HEK293 (cell line): ENCODE measurements at regions of chr17 and their contacts with region 1.

Region 1: DNA sequence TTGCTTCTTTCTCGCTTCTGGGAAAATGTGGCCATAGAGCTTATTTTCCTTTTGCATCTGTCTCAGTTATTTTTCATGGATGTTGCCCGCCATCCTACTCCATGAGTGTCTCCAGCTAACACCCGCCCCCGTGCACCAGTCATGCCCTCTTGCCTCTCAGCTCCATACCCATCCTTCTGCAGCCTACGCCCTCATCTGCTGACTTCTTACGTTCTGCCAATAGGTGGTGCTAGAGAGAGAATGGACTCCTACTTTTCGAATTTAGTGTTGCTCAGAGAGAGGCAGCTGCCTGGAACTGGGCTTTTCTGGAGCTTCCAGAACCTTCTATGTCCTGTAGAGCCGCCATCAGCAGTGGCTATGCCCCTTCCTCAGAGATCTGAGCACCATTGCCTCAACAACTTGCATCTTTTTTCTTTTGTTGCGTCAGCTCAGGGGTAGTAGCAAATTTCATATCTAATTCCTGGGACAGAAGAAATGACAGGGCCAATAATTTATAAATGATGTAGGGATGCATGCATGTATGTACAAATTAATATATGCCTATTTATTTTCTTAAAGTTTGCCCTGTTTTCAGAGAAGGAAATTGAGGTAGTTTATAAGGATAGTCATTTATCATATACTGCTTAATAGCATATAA is 119.7 kb upstream of the MYOCD start:
- H3K4me3 ChIP-seq: no peak overlapping the region
- H3K27ac ChIP-seq: no peak overlapping the region
- H3K4me1 ChIP-seq: no peaks in the 10 kb centered on the region
- CTCF ChIP-seq: peak; percentile 35; the same call in 1 of the 2 replicates

Region 2: DNA sequence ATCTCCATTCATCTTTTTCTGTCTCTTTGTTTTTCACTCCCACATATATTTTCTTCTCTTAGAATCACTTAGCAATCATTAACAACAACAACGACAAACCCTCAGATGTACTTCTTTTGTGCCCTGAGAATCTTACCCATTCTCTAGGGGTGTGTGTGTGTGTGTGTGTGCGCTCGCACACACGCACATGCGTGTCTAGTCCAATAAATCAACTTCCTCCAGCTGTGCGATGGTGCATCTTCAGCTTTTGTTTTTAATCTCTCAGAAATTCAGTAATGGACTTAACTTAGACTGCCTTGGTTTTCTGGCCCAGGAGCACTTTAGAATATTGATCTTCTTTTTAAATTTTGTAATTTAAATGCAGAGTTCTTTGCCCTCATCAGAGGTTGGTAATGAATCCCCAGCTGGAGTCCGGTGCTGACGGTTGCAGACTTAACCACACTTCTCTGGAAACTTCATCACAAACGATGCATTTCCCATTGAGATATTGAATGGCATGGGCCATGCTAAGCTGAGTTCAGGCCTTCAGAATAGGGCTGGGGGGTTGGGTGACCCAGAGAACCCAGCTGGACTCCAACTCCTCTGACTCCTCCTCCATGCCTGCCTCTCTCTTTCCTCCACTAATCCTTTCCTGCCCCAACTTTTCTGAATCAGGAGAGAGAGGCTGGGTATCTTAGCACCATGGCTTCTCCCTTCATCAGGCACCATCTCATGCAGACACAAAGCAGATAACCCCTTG is 742.6 kb before region 1 on chr17:
- CTCF ChIA-PET with region 1: no interaction called
- POLR2A ChIA-PET with region 1: no interaction called
- H3K4me3 ChIP-seq: no peak overlapping the region
- H3K27ac ChIP-seq: no peak overlapping the region
- H3K4me1 ChIP-seq: no peaks in the 10 kb centered on the region
- CTCF ChIP-seq: no peak

Region 3: DNA sequence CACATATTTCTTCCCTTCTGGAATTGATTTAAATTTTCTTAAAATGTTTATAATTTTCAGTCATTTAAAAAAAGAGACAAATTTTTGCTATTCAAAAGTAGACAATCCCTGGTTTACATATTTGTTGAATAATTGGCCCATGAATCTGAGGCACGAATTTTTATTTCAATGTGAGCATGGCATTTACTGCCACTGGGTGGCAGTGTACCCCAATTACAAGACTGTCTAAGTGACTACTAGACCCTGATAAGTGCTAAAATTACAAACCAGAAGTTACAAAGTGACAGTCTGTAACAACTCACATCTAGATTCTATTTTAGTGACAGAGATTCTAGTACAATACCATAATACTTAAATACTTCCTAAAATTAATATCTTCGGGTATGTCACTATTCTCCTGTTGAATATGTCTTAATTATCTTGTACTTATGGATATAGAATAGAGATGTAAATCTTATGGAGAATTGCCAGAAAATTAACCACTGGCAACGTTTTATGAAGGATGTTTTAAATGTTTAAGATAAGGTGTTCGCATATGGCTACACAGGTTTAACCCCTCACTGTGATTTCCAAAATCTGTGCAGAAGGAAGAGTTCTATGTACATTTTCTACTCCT is 289.5 kb before region 1 on chr17:
- CTCF ChIA-PET with region 1: interaction called, 14 read pairs
- POLR2A ChIA-PET with region 1: no interaction called
- H3K4me3 ChIP-seq: no peak overlapping the region
- H3K27ac ChIP-seq: no peak overlapping the region
- H3K4me1 ChIP-seq: no peaks in the 10 kb centered on the region
- CTCF ChIP-seq: peak; percentile 25; the same call in 1 of the 2 replicates

Region 4: GRCh38 chr17:12301551-12301950 is 244.4 kb before region 1 on chr17:
- CTCF ChIA-PET with region 1: no interaction called
- POLR2A ChIA-PET with region 1: no interaction called
- H3K4me3 ChIP-seq: no peak overlapping the region
- H3K27ac ChIP-seq: no peak overlapping the region
- H3K4me1 ChIP-seq: no peaks in the 10 kb centered on the region
- CTCF ChIP-seq: no peak

Region 5: GRCh38 chr17:12395733-12396354 is 150.2 kb before region 1 on chr17:
- CTCF ChIA-PET with region 1: interaction called, 10 read pairs
- POLR2A ChIA-PET with region 1: no interaction called
- H3K4me3 ChIP-seq: no peak overlapping the region
- H3K27ac ChIP-seq: no peak overlapping the region
- H3K4me1 ChIP-seq: peaks cover 5% of the 10 kb centered on the region; the same call in 1 of the 2 replicates
- CTCF ChIP-seq: no peak

Region 6: GRCh38 chr17:12522743-12523183 is 23.2 kb before region 1 on chr17:
- CTCF ChIA-PET with region 1: interaction called, 12 read pairs
- POLR2A ChIA-PET with region 1: interaction called, 4 read pairs
- H3K4me3 ChIP-seq: no peak overlapping the region; the same call in 1 of the 2 replicates
- H3K27ac ChIP-seq: peak overlapping the region; percentile 32; the same call in 1 of the 2 replicates
- H3K4me1 ChIP-seq: peaks cover 17% of the 10 kb centered on the region
- CTCF ChIP-seq: no peak

Region 7: DNA sequence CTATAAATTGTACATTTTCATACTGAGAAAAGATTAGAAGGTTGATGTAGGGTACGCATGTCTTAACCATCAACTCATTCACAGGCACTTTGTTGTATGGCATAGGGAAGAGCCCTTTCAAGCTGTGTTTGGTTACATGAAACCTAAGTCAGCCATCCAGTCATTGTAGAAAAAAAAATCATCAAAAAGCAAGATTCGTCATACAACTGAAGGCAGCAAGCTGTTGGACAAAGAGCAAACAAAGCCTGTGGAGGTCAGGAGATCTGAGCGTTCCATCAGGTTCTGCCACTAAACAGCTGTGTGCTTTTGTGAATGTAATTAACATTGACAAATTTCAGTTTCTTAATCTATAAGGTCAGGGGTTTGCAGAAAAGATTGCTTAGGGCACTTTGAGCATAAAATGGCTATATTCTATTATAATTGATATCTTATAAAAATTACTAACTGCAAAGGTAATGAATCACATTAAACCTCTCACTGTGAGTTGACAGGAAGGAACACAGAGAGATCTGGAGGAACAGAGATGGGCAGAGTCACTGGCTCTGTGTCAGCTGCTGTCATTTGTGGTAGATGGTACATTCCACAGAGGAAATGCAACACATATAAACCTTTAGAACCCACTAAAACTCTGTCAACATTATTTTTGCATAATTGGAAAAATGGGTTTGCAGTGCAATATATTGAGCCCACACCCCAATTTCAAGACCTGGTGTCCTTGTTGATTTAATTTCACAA is 53.4 kb after region 1 on chr17:
- CTCF ChIA-PET with region 1: interaction called, 19 read pairs
- POLR2A ChIA-PET with region 1: no interaction called
- H3K4me3 ChIP-seq: no peak overlapping the region
- H3K27ac ChIP-seq: no peak overlapping the region
- H3K4me1 ChIP-seq: no peaks in the 10 kb centered on the region; the same call in 1 of the 2 replicates
- CTCF ChIP-seq: no peak

Region 8: GRCh38 chr17:12719948-12720347 is 174.0 kb after region 1 on chr17:
- CTCF ChIA-PET with region 1: no interaction called
- POLR2A ChIA-PET with region 1: no interaction called
- H3K4me3 ChIP-seq: no peak overlapping the region
- H3K27ac ChIP-seq: no peak overlapping the region
- H3K4me1 ChIP-seq: no peaks in the 10 kb centered on the region
- CTCF ChIP-seq: no peak

Region 9: DNA sequence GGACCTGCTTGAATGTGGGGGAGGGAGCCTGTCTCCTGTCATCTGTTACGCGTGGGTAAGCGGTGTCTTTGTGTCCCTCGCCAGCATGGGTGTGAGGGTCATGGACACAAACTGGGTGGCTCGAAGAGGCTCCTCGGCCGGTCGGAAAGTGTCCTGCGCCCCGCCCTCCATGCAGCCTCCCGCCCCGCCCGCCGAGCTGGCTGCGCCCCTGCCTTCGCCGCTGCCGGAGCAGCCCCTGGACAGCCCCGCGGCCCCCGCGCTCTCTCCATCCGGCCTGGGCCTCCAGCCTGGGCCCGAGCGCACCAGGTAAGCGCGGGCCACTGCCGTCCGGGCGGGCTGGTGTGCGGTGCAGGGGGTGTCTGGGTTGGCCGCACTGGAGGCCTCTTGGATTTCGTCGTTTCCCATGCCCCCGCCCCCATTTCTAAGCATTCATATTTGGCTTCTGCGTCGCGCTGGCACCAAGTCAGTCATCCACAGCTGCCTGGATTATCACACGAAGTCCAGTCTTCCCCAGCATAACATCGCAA is 428.1 kb after region 1 on chr17:
- CTCF ChIA-PET with region 1: no interaction called
- POLR2A ChIA-PET with region 1: no interaction called
- H3K4me3 ChIP-seq: no peak overlapping the region
- H3K27ac ChIP-seq: no peak overlapping the region
- H3K4me1 ChIP-seq: no peaks in the 10 kb centered on the region
- CTCF ChIP-seq: no peak